ENCODE measurements at regions of chr12 and their contacts with region 1.

Region 1: GRCh38 chr12:130818635-130819576 is 20.1 kb downstream of the STX2 start:
- DNase-seq: no peak
- ATAC-seq: peak; percentile 99
- H3K4me3 ChIP-seq: no peak overlapping the region
- H3K27ac ChIP-seq: no peak overlapping the region
- H3K4me1 ChIP-seq: peaks cover 0 to 5% of the 10 kb centered on the region in 2 experiments; a peak in 2 of 4 replicates
- H3K27me3 ChIP-seq: no peaks in the 10 kb centered on the region
- CTCF ChIP-seq: peak; percentile 53 to 74 (median 68); a peak in 5 of 6 replicates
- POLR2A ChIP-seq: no peak
- RAD21 ChIP-seq: peak; percentile 57

Region 2: GRCh38 chr12:130076752-130077151 is 742.2 kb before region 1 on chr12:
- CTCF ChIA-PET with region 1: no interaction called
- POLR2A ChIA-PET with region 1: no interaction called
- RAD21 ChIA-PET with region 1: no interaction called
- intact Hi-C with region 1: no loop called
- DNase-seq: no peak
- ATAC-seq: no peak
- H3K4me3 ChIP-seq: no peak overlapping the region
- H3K27ac ChIP-seq: no peak overlapping the region
- H3K4me1 ChIP-seq: no peaks in the 10 kb centered on the region
- H3K27me3 ChIP-seq: no peaks in the 10 kb centered on the region
- CTCF ChIP-seq: no peak
- POLR2A ChIP-seq: no peak
- RAD21 ChIP-seq: no peak

Region 3: GRCh38 chr12:130761537-130762318 is 57.2 kb before region 1 on chr12:
- CTCF ChIA-PET with region 1: interaction called, 4 read pairs
- POLR2A ChIA-PET with region 1: no interaction called
- RAD21 ChIA-PET with region 1: no interaction called
- intact Hi-C with region 1: loop called (anchors 1 kb)
- DNase-seq: peak; percentile 29
- ATAC-seq: peak; percentile 72
- H3K4me3 ChIP-seq: no peak overlapping the region
- H3K27ac ChIP-seq: no peak overlapping the region
- H3K4me1 ChIP-seq: no peaks in the 10 kb centered on the region
- H3K27me3 ChIP-seq: no peaks in the 10 kb centered on the region
- CTCF ChIP-seq: peak; percentile 49 to 55 (median 52); a peak in 5 of 6 replicates
- POLR2A ChIP-seq: no peak
- RAD21 ChIP-seq: peak; percentile 86

Region 4: DNA sequence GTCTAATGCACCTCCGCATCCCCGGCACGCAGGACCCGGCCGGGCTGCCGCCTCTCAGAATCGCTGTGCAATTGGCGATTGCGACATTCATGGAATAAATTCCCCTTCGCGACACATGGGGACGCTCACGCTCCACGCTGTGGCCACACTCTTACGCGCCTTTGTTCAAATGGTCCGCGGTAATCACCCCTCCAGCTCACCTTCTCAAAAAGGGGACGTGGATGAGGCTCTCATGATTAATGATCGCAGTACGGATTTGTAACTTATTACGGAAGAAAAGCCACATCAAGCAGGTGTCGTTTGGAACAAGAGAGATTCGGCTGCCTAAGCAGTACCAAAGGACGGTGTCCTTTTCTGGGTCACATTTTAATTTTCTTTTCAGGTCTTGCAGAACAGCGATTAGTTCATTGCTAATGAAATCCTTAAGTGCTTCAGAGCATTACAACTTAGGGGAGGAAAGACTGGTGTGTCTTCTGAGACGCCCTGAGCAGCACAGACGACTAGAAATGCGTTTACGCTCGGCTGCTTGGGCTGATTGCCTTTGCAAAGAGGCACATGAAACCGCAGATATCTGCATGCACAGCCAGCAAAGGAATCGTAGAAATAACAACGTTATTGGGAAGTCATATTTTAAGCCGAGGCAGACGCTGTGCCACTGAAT is 97.5 kb after region 1 on chr12:
- CTCF ChIA-PET with region 1: no interaction called
- POLR2A ChIA-PET with region 1: no interaction called
- RAD21 ChIA-PET with region 1: no interaction called
- intact Hi-C with region 1: no loop called
- DNase-seq: peak; percentile 38
- ATAC-seq: peak; percentile 94
- H3K4me3 ChIP-seq: peak overlapping the region in 1 of 2 experiments; percentile 11; a peak in 2 of 4 replicates
- H3K27ac ChIP-seq: no peak overlapping the region
- H3K4me1 ChIP-seq: peaks cover 2 to 6% of the 10 kb centered on the region in 2 experiments; a peak in 1 of 4 replicates
- H3K27me3 ChIP-seq: peaks cover 10% of the 10 kb centered on the region; the same call in 1 of the 2 replicates
- CTCF ChIP-seq: peak; percentile 78 to 92 (median 87)
- POLR2A ChIP-seq: no peak
- RAD21 ChIP-seq: peak; percentile 97

Measured in HCT116 (cell line).